CD8-positive, alpha-beta T cell (primary cell): ENCODE measurements at regions of chr1 and their contacts with region 1.

Region 1: DNA sequence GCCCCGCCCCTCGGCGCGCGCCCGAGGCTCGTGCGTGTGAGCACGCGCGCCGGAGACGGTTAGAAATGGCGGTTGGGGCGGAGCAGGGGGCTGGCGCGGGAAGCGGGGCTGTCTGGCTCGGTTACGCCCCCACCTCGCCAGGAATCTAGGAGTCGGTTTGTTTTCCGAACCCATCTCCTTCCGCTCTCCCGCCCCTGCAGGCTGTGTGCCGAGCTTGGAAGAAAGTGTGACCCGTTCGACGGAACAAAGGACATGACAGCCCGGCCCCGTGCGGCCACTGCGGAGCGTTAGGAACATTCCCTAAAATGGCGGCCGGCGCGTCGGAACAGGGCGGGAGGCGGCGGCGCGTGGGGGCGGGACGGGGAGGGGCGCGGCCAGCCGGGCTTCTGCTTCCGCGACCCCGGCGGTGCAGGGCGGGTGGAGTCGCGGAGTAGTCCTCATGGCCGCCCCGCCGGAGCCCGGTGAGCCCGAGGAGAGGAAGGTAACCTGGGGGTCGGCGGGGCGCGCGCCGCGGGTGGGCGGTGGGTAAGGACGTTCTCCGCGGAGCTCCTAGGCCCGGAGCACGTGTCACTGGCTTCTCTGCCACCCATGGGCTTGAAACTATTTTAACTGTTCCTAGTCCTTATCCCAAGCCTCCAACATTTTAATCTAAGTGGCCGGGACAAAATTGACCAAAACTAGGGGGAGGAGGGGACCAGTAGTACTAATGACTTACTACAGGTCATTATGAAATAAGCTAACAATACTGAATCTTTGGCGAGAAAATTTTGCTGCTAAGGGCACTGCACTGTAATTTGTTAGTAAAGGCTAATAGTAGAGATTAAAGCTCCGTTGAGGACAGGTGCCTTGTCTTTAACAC is at the start of gene COX20:
- DNase-seq: peak; percentile 81 to 96 (median 90)
- ATAC-seq: peak; percentile 64
- H3K4me3 ChIP-seq: peak within 1 kb of the TSS; percentile 74 to 84
- H3K4me3 Mint-ChIP-seq: peak within 1 kb of the TSS; percentile 94
- H3K27ac ChIP-seq: peak within 1 kb of the TSS; percentile 88 to 98
- H3K27ac Mint-ChIP-seq: peak within 1 kb of the TSS; percentile 99
- H3K4me1 ChIP-seq: peaks cover 34% of the 10 kb centered on the region
- H3K4me1 Mint-ChIP-seq: peaks cover 48% of the 10 kb centered on the region
- H3K27me3 ChIP-seq: no peaks in the 10 kb centered on the region
- H3K27me3 Mint-ChIP-seq: no peaks in the 10 kb centered on the region
- CTCF ChIP-seq: no peak
- total RNA-seq, gene COX20: 17.4 to 17.7 TPM

Region 2: GRCh38 chr1:243850452-243851256 is 984.9 kb before region 1 on chr1:
- CTCF ChIA-PET with region 1: no interaction called
- POLR2A ChIA-PET with region 1: no interaction called
- intact Hi-C with region 1: loop called in 1 of 2 experiments (anchors 10 kb)
- DNase-seq: peak in 8 of 9 experiments; percentile 71 to 92 (median 84)
- ATAC-seq: peak; percentile 44
- H3K4me3 ChIP-seq: peak overlapping the region; percentile 53 to 66
- H3K4me3 Mint-ChIP-seq: peak overlapping the region; percentile 93
- H3K27ac ChIP-seq: peak overlapping the region; percentile 80 to 82
- H3K27ac Mint-ChIP-seq: peak overlapping the region; percentile 96
- H3K4me1 ChIP-seq: peaks cover 24% of the 10 kb centered on the region
- H3K4me1 Mint-ChIP-seq: peaks cover 38% of the 10 kb centered on the region
- H3K27me3 ChIP-seq: no peaks in the 10 kb centered on the region
- H3K27me3 Mint-ChIP-seq: peaks cover 2% of the 10 kb centered on the region
- CTCF ChIP-seq: no peak

Region 3: DNA sequence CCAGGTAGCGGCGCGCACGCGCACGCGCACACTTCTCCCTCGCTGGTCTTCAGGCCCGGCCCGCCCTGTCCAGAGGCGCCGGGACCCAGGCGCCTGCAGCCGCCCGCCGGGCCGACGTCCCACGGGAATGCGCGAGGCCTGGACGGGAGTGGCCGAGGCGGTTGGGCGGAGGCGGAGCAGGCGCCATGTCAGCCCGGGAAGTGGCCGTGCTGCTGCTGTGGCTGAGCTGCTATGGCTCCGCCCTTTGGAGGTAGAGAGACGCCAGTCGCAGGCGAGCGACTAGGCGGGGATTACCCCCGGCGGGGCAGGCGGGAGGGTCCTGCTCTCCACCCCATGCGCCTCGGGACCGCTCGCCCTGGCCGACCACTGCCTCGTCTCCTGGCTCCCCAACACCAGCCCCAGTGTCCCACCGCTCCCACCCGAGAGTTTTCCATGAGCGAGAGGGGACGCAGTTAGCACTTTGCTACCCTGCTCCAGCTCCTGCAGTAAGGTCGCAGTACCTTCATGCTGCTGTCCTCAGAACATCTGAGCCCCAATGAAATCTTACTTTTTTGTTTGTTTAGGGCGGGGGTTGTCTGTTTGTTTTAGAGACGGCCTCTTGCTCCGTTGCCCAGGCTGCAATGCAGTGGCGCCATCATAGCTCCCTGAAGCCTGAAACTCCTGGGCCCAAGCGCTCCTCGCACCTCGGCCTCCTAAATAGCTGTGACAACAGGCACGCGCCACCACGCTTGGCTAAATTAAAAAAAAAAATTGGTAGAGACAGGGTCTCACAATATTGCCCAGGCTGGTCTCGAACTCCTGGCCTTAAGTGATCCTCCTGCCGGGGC is 374.0 kb before region 1 on chr1 and contains the start of gene CATSPERE:
- CTCF ChIA-PET with region 1: no interaction called
- POLR2A ChIA-PET with region 1: interaction called, 12 read pairs
- intact Hi-C with region 1: loop called in 1 of 2 experiments (anchors 10 kb)
- DNase-seq: peak; percentile 48 to 88 (median 74)
- ATAC-seq: peak; percentile 98
- H3K4me3 ChIP-seq: peak within 1 kb of the TSS; percentile 54 to 60
- H3K4me3 Mint-ChIP-seq: peak within 1 kb of the TSS; percentile 84
- H3K27ac ChIP-seq: peak within 1 kb of the TSS; percentile 66 to 71
- H3K27ac Mint-ChIP-seq: peak within 1 kb of the TSS; percentile 93
- H3K4me1 ChIP-seq: peaks cover 6% of the 10 kb centered on the region
- H3K4me1 Mint-ChIP-seq: peaks cover 17% of the 10 kb centered on the region
- H3K27me3 ChIP-seq: no peaks in the 10 kb centered on the region
- H3K27me3 Mint-ChIP-seq: no peaks in the 10 kb centered on the region
- CTCF ChIP-seq: no peak
- total RNA-seq, gene CATSPERE: 0.33 to 0.92 TPM

Region 4: GRCh38 chr1:244817415-244817894 is 18.1 kb before region 1 on chr1:
- CTCF ChIA-PET with region 1: no interaction called
- POLR2A ChIA-PET with region 1: no interaction called
- intact Hi-C with region 1: no loop called
- DNase-seq: no peak
- ATAC-seq: no peak
- H3K4me3 ChIP-seq: no peak overlapping the region
- H3K4me3 Mint-ChIP-seq: no peak overlapping the region
- H3K27ac ChIP-seq: no peak overlapping the region
- H3K27ac Mint-ChIP-seq: no peak overlapping the region
- H3K4me1 ChIP-seq: no peaks in the 10 kb centered on the region
- H3K4me1 Mint-ChIP-seq: peaks cover 4% of the 10 kb centered on the region
- H3K27me3 ChIP-seq: peaks cover 0 to 3% of the 10 kb centered on the region in 2 experiments
- H3K27me3 Mint-ChIP-seq: peaks cover 12% of the 10 kb centered on the region
- CTCF ChIP-seq: no peak

Region 5: DNA sequence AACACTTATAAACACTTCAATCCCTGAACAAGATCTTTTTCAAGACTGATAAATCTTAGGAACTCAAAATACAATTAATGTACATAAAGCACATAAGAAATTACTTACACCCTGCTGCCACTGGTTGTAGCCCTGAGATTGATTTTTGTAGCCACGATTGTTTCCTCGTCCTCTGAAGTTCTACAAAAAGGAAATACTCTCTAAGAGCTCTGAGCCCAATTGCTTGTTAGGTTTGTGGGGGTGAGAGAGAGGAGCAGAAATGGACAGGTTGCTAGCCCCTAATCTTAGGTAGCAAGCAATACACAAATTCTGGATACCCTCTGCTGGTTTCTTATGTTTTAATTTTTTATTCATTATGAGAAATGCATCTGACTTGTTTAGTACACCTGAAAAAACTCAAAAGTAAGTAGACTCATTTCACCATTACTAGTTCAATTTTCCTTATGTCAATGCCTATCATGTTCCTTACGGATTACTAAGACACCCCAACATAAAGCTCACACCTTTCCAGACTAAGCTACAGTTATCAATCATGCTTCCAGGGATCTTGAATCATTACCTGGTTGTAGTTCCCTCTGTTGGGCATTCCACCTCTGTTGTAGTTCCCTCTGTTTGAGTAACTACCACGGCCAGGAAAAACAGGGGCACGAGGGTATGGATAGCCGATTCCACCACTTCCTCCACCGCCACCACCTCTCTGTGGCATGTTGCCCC is 19.5 kb after region 1 on chr1:
- CTCF ChIA-PET with region 1: interaction called, 5 read pairs
- POLR2A ChIA-PET with region 1: interaction called, 762 read pairs
- intact Hi-C with region 1: loop called in 1 of 2 experiments (anchors 1 kb)
- DNase-seq: peak in 1 of 9 experiments; percentile 33
- ATAC-seq: peak; percentile 38
- H3K4me3 ChIP-seq: no peak overlapping the region
- H3K4me3 Mint-ChIP-seq: peak overlapping the region; percentile 55
- H3K27ac ChIP-seq: peak overlapping the region in 1 of 2 experiments; percentile 44
- H3K27ac Mint-ChIP-seq: peak overlapping the region; percentile 55
- H3K4me1 ChIP-seq: peaks cover 86% of the 10 kb centered on the region
- H3K4me1 Mint-ChIP-seq: peaks cover 89% of the 10 kb centered on the region
- H3K27me3 ChIP-seq: no peaks in the 10 kb centered on the region
- H3K27me3 Mint-ChIP-seq: no peaks in the 10 kb centered on the region
- CTCF ChIP-seq: no peak

Region 6: DNA sequence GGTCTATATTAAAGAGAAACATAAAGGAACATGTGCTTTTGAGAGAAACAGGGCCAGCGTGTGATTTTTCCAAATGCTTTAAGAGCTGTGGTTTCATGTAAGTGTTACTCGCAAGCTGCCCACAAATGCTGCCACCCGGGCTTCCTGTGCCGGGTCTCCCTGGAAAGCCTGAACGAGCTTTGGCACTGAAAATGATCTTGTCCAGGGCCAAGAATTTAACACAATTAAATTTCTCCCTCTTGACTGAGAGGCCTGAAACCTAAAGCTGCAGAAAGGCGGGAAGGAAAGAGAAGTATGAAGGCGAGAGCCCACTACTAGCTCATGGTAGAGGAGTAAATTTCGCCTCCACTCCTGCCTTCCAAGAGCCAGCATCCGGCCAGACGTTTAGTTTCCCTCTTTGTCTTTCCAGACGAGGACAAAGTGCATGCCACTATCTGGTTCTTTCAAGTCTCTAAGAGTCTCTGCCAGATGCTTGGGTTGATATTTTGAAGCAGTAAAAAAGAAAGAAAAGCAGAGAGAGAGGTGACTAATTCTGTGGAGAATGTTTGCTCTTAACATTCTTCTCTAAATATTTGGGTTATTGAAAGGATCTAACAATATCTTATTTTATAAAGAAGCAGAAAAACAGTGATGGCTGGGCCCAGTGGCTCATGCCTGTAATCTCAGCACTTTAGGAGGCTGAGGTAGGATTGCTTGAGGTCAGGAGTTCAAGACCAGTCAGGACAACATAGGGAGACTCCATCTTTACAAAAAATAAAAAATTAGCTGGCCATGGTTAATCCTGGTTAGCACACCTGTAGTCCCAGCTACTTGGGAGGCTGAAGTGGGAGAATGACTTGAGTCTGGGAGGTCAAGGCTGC is 128.8 kb after region 1 on chr1:
- CTCF ChIA-PET with region 1: no interaction called
- POLR2A ChIA-PET with region 1: interaction called, 127 read pairs
- intact Hi-C with region 1: no loop called
- DNase-seq: peak in 4 of 9 experiments; percentile 19 to 63 (median 36)
- ATAC-seq: no peak
- H3K4me3 ChIP-seq: no peak overlapping the region
- H3K4me3 Mint-ChIP-seq: no peak overlapping the region
- H3K27ac ChIP-seq: no peak overlapping the region
- H3K27ac Mint-ChIP-seq: no peak overlapping the region
- H3K4me1 ChIP-seq: peaks cover 17% of the 10 kb centered on the region
- H3K4me1 Mint-ChIP-seq: peaks cover 18% of the 10 kb centered on the region
- H3K27me3 ChIP-seq: no peaks in the 10 kb centered on the region
- H3K27me3 Mint-ChIP-seq: no peaks in the 10 kb centered on the region
- CTCF ChIP-seq: no peak

Region 7: GRCh38 chr1:246566128-246566812 is 1730.8 kb after region 1 on chr1 and contains the starts of genes CNST and TFB2M:
- CTCF ChIA-PET with region 1: no interaction called
- POLR2A ChIA-PET with region 1: no interaction called
- intact Hi-C with region 1: loop called in 1 of 2 experiments (anchors 10 kb)
- DNase-seq: peak; percentile 75 to 96 (median 91)
- ATAC-seq: peak; percentile 71
- H3K4me3 ChIP-seq: peak within 1 kb of the TSS; percentile 92 to 99
- H3K4me3 Mint-ChIP-seq: peak within 1 kb of the TSS; percentile 98
- H3K27ac ChIP-seq: peak within 1 kb of the TSS; percentile 83 to 91
- H3K27ac Mint-ChIP-seq: peak within 1 kb of the TSS; percentile 97
- H3K4me1 ChIP-seq: peaks cover 51% of the 10 kb centered on the region
- H3K4me1 Mint-ChIP-seq: peaks cover 54% of the 10 kb centered on the region
- H3K27me3 ChIP-seq: no peaks in the 10 kb centered on the region
- H3K27me3 Mint-ChIP-seq: no peaks in the 10 kb centered on the region
- CTCF ChIP-seq: no peak
- total RNA-seq, gene CNST: 64.1 to 64.4 TPM
- total RNA-seq, gene TFB2M: 15.8 to 16.4 TPM